Heart left ventricle (tissue), 16 donors: ENCODE measurements at regions of chr5 and their contacts with region 1.

Region 1: GRCh38 chr5:75603371-75603770 is 7.9 kb upstream of the ANKDD1B start:
- DNase-seq: no peak
- ATAC-seq: no peak
- H3K4me3 ChIP-seq: no peak overlapping the region
- H3K27ac ChIP-seq: no peak overlapping the region
- H3K4me1 ChIP-seq: peaks cover 0 to 13% (median 3%) of the 10 kb centered on the region in 12 donors
- H3K27me3 ChIP-seq: no peaks in the 10 kb centered on the region
- CTCF ChIP-seq: no peak
- POLR2A ChIP-seq: no peak

Region 2: DNA sequence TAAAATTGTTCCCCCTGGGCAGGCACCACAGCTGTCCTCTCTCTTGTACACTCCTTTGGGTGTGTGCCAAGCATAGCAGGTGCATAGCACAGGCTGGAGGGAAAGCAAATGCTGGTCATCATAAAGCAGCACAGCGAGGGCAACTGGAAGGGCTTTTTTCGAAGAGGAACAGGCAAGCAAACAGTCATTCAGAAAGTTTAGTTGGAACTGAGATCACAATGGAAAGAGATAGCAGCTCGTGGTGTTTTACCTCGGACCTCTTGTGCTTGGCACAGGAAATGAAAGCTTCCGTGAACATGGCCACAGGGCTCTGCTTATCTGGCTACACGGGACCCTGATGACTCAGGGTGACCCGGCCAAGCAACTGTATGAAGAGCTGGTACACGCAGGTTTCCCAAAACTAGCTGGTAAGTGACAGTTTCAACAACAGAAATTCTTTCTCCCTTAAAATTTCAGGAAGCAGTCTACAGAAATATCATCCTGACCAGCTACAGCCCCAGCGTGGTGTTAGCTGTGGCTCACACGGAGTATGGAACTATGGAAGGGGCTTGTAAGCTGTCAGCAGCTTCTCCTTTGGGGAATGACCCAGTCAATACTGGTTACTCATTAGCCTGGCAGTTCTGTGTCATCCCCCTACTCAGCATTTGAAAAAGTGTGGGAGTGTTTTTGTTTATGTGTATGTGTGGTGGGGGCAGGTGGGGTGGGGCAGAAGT is 65.8 kb after region 1 on chr5:
- intact Hi-C with region 1: loop called in 2 of 10 experiments (anchors 10 kb)
- DNase-seq: peak in 3 of 5 donors; percentile 28 to 41 (median 39)
- ATAC-seq: peak; percentile 46 to 87 (median 75)
- H3K4me3 ChIP-seq: peak overlapping the region in 9 of 12 donors; percentile 1 to 41 (median 34)
- H3K27ac ChIP-seq: peak overlapping the region in 2 of 12 donors; percentile 28 to 72
- H3K4me1 ChIP-seq: peaks cover 0 to 18% (median 4%) of the 10 kb centered on the region in 12 donors
- H3K27me3 ChIP-seq: no peaks in the 10 kb centered on the region
- CTCF ChIP-seq: no peak
- POLR2A ChIP-seq: no peak